Right cardiac atrium (tissue), 5 donors: ENCODE measurements at regions of chr1 and their contacts with region 1.

Region 1: GRCh38 chr1:205591522-205592351 is 40.1 kb downstream of the ELK4 start:
- DNase-seq: peak; percentile 80 to 95 (median 94)
- ATAC-seq: peak; percentile 90 to 92
- H3K4me3 ChIP-seq: peak overlapping the region; percentile 15
- H3K27ac ChIP-seq: no peak overlapping the region
- H3K4me1 ChIP-seq: no peaks in the 10 kb centered on the region
- H3K27me3 ChIP-seq: no peaks in the 10 kb centered on the region

Region 2: GRCh38 chr1:205528887-205529825 is 62.6 kb before region 1 on chr1:
- intact Hi-C with region 1: no loop called
- DNase-seq: peak; percentile 83 to 93 (median 92)
- ATAC-seq: peak; percentile 64 to 79
- H3K4me3 ChIP-seq: no peak overlapping the region
- H3K27ac ChIP-seq: no peak overlapping the region
- H3K4me1 ChIP-seq: no peaks in the 10 kb centered on the region
- H3K27me3 ChIP-seq: no peaks in the 10 kb centered on the region

Region 3: DNA sequence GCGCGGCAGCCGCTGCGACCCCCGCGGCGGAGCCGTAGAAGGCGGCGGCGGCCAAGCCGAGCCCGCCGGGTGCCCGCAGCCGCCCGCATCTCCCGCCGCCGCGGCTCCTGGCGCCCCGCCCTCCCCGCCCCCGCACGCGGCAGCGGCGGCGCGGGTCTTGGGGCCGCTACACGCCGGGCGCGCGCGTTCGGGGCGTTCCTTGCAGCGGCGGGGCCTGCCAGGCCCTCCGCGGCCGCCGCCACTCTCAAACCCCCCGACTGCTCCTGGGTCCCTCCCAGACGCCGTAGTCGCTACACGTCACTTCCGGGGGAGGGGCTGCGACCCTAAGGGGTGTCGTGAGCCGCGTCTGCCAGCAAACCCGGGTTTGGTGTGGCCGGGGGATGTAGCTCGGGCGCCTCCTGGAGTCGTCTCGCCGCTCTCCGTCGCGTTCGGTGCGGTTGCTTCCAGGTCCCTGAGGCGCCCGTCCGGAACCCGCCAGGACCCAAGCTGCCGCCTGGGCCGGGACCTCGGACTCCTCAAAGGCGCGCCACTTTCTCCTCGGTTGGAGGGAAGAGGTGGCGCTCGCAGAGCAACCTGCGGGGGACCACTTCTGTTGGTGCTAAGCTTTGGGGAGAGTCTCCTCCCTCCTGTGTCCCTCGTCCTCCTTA is 40.1 kb after region 1 on chr1 and contains the start of gene ELK4:
- intact Hi-C with region 1: loop called in 3 of 4 experiments (anchors 5 kb)
- DNase-seq: peak; percentile 99 to 100 (median 100)
- ATAC-seq: peak; percentile 98 to 99
- H3K4me3 ChIP-seq: peak within 1 kb of the TSS; percentile 100
- H3K27ac ChIP-seq: peak within 1 kb of the TSS; percentile 100
- H3K4me1 ChIP-seq: no peaks in the 10 kb centered on the region
- H3K27me3 ChIP-seq: no peaks in the 10 kb centered on the region
- total RNA-seq, gene ELK4: 39.7 to 45.0 (median 43.2) TPM

Region 4: GRCh38 chr1:205645519-205645918 is 53.8 kb after region 1 on chr1:
- intact Hi-C with region 1: loop called in 1 of 4 experiments (anchors 5 kb)
- DNase-seq: no peak
- ATAC-seq: no peak
- H3K4me3 ChIP-seq: no peak overlapping the region
- H3K27ac ChIP-seq: no peak overlapping the region
- H3K4me1 ChIP-seq: no peaks in the 10 kb centered on the region
- H3K27me3 ChIP-seq: no peaks in the 10 kb centered on the region

Region 5: DNA sequence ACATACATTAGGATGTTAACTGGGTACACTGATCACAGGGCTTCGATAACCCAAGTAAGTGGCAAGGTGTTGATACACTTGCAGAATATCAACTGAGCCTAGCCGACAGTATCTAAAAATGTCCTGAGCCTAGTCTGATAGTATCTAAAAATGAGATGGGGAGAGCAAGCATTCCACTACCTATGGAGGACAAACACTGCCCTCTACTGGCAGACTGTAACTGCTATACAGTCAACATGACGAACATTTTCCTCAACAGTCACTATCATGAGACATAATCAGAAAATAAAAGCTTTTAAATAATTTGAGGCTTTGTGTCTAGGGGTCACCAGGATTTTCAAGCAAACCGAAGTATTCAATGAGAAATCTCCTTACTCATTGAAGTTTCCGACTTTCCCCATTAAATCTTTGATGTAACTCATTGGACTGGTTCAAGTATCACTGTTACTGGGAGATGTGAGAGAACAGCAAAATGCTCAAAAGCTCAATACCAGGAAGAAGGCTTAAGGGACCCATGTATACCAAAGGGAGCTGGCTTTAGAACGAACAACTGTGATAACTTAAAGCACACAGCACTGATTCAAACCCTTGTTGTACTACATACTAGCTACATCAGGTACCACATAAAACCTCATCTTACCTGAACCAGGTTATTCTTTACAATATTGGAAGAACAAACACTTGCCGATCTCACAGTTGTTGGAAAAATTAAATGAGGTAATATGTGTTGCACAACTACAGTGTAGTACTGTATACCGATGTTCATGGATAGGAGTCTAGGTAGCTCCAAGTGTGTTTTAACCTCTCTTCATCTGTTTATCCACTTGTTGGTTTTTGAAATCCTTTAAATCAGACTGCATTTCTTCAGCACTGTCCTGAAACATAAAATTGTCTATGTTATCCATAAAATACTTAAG is 119.6 kb after region 1 on chr1:
- intact Hi-C with region 1: loop called in 1 of 4 experiments (anchors 5 kb)
- DNase-seq: peak in 1 of 3 donors; percentile 25
- ATAC-seq: peak; percentile 78 to 79
- H3K4me3 ChIP-seq: no peak overlapping the region
- H3K27ac ChIP-seq: no peak overlapping the region
- H3K4me1 ChIP-seq: peaks cover 7% of the 10 kb centered on the region
- H3K27me3 ChIP-seq: no peaks in the 10 kb centered on the region

Region 6: GRCh38 chr1:205729945-205730610 is 138.3 kb after region 1 on chr1:
- intact Hi-C with region 1: no loop called
- DNase-seq: no peak
- ATAC-seq: no peak
- H3K4me3 ChIP-seq: no peak overlapping the region
- H3K27ac ChIP-seq: no peak overlapping the region
- H3K4me1 ChIP-seq: peaks cover 2% of the 10 kb centered on the region
- H3K27me3 ChIP-seq: no peaks in the 10 kb centered on the region

Region 7: DNA sequence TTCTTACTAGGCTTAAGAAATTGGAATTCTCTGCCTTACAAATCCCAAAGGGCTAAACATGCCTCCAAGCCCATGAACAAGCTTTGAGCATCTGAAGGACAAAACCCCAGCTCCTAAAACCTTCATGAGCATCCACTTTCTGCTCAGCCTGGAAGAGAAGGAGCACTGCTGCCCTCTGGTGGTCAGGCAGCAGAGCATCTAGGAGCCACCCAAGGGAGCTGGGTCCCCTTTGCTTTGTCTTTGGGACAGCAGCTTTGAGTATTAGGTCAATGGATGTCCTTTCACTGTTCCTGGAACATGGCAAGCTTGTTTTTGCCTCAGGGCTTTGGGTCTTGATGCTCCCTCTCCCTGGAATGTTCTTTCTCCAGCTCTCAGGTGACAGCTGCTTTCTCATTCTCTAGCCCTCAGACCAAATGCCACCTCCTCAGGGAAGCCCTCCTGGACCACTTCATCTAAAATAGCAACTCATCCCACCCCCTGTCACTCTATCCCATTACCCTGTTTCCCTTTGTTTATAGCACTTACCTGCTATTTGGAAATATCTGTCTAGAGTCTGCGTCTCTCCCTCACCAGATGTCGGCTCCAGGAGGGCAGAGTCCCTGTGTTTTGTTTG is 385.8 kb after region 1 on chr1:
- intact Hi-C with region 1: loop called in 1 of 4 experiments (anchors 10 kb)
- DNase-seq: peak; percentile 65 to 89 (median 81)
- ATAC-seq: peak; percentile 76 to 78
- H3K4me3 ChIP-seq: no peak overlapping the region
- H3K27ac ChIP-seq: peak overlapping the region; percentile 93
- H3K4me1 ChIP-seq: peaks cover 4% of the 10 kb centered on the region
- H3K27me3 ChIP-seq: no peaks in the 10 kb centered on the region